Calu3 (cell line): ENCODE measurements at regions of chr10 and their contacts with region 1.

Region 1: GRCh38 chr10:33008499-33009243 is 50.6 kb upstream of the ITGB1 start:
- DNase-seq: peak; percentile 80
- H3K4me3 Mint-ChIP-seq: peak overlapping the region; percentile 8
- H3K27ac Mint-ChIP-seq: peak overlapping the region; percentile 83
- H3K4me1 Mint-ChIP-seq: peaks cover 38% of the 10 kb centered on the region
- H3K27me3 Mint-ChIP-seq: no peaks in the 10 kb centered on the region
- CTCF ChIP-seq: peak; percentile 89

Region 2: GRCh38 chr10:32338262-32338661 is 670.4 kb before region 1 on chr10:
- CTCF ChIA-PET with region 1: no interaction called
- intact Hi-C with region 1: no loop called
- DNase-seq: no peak
- H3K4me3 Mint-ChIP-seq: no peak overlapping the region
- H3K27ac Mint-ChIP-seq: no peak overlapping the region
- H3K4me1 Mint-ChIP-seq: peaks cover 46% of the 10 kb centered on the region
- H3K27me3 Mint-ChIP-seq: no peaks in the 10 kb centered on the region
- CTCF ChIP-seq: no peak

Region 3: GRCh38 chr10:32367793-32368453 is 640.7 kb before region 1 on chr10:
- CTCF ChIA-PET with region 1: no interaction called
- intact Hi-C with region 1: loop called (anchors 5 kb)
- DNase-seq: peak; percentile 71
- H3K4me3 Mint-ChIP-seq: no peak overlapping the region
- H3K27ac Mint-ChIP-seq: no peak overlapping the region
- H3K4me1 Mint-ChIP-seq: peaks cover 22% of the 10 kb centered on the region
- H3K27me3 Mint-ChIP-seq: no peaks in the 10 kb centered on the region
- CTCF ChIP-seq: peak; percentile 74

Region 4: GRCh38 chr10:32795598-32796183 is 213.0 kb before region 1 on chr10:
- CTCF ChIA-PET with region 1: interaction called, 5 read pairs
- intact Hi-C with region 1: loop called (anchors 1 kb)
- DNase-seq: peak; percentile 23
- H3K4me3 Mint-ChIP-seq: no peak overlapping the region
- H3K27ac Mint-ChIP-seq: no peak overlapping the region
- H3K4me1 Mint-ChIP-seq: peaks cover 17% of the 10 kb centered on the region
- H3K27me3 Mint-ChIP-seq: no peaks in the 10 kb centered on the region
- CTCF ChIP-seq: peak; percentile 48

Region 5: DNA sequence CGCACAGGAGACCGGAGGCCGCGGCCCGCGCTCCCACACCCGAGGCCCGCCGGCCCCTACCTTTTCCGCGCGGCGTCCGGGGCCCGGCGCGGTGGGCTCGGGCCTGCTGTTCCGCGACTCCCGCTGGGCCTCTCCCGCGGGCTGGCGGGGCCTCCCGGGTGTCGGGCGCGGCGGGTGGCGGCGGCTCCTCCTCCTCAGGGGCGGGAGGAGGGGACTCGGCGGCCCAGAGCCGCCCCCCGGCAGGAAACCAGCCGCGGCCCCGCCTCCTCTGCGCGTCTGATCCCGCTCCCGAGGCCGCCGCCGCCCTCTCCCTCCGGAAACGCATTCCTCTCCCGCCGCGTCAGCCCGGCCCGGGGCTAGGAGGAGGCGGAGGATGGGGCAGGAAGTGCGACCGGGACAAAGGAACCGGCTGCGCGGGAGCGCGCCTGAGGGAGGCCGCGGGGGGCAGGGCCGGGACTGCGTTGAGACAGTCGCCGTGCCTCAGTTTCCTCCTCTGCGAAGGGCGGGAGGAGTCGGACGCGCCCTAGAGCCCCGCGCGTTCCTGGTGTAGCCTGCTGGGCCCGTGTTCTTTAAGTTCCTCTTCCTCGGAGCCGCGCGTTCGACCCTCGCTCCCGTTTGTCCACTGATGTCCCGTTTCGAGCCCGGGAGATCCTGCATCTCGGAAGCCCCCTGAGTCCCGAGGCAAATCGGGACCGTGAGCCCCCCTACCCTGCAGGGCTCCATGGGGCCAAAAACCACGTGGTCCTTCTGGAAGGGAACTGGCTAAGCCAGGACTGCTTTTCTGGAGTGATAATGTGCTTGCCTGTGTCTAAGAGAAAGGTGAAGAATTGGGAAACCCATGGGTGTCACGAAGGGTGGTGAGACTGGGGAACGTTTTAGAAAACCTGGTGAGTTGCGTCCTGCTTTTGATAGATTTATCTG is 50.3 kb before region 1 on chr10 and contains the start of gene ITGB1:
- CTCF ChIA-PET with region 1: interaction called, 17 read pairs
- intact Hi-C with region 1: loop called (anchors 1 kb)
- DNase-seq: peak; percentile 99
- H3K4me3 Mint-ChIP-seq: peak within 1 kb of the TSS; percentile 98
- H3K27ac Mint-ChIP-seq: peak within 1 kb of the TSS; percentile 100
- H3K4me1 Mint-ChIP-seq: peaks cover 32% of the 10 kb centered on the region
- H3K27me3 Mint-ChIP-seq: no peaks in the 10 kb centered on the region
- CTCF ChIP-seq: no peak
- total RNA-seq, gene ITGB1: 1,388 and 1,455 TPM in 2 replicates

Region 6: GRCh38 chr10:33134011-33134751 is 125.5 kb after region 1 on chr10:
- CTCF ChIA-PET with region 1: interaction called, 9 read pairs
- intact Hi-C with region 1: loop called (anchors 1 kb)
- DNase-seq: peak; percentile 91
- H3K4me3 Mint-ChIP-seq: peak overlapping the region; percentile 28
- H3K27ac Mint-ChIP-seq: peak overlapping the region; percentile 100
- H3K4me1 Mint-ChIP-seq: peaks cover 67% of the 10 kb centered on the region
- H3K27me3 Mint-ChIP-seq: no peaks in the 10 kb centered on the region
- CTCF ChIP-seq: no peak

Region 7: GRCh38 chr10:33306701-33307512 is 298.2 kb after region 1 on chr10:
- CTCF ChIA-PET with region 1: no interaction called
- intact Hi-C with region 1: no loop called
- DNase-seq: no peak
- H3K4me3 Mint-ChIP-seq: no peak overlapping the region
- H3K27ac Mint-ChIP-seq: no peak overlapping the region
- H3K4me1 Mint-ChIP-seq: no peaks in the 10 kb centered on the region
- H3K27me3 Mint-ChIP-seq: no peaks in the 10 kb centered on the region
- CTCF ChIP-seq: no peak